Gastrocnemius medialis (tissue), 4 donors: ENCODE measurements at regions of chr4 and their contacts with region 1.

Region 1: DNA sequence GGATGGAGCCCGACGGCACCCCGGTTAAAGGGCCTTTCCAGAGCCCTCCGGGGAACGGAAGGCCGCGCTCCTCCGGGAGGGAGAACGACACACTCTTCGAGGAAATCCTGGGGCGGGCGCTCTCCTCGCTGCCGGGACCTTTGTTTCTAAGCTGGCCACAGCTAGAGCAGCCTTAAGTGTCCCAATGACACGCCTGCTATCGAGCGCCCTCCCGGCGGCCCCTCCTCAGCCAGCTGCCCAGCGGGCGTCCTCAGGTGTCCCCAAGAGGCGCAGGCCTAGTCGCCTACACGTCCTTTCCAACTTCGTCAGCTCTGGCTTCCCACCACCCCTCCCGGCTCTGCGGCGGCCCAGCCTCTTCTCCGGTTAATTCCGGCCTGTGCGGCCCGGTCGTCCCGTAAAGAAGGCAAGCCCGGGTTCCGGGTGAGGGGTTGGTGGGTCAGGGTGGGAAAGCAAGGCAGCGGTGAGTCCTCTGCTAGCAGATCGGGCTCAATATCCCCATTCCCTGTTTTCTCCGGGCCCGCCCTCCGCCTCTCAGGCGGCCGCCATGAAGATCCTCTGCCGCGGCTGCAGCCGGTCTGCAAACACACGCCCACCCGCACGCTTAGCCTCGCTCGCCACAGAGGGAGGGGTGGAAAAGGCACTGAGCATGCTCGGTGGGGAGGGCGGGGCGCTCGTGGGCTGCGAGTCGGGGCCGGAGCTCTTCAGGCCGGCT is 449 bp upstream of the RAP1GDS1 start:
- DNase-seq: peak; percentile 93 to 94
- ATAC-seq: peak; percentile 86
- H3K4me3 ChIP-seq: peak overlapping the region; percentile 89 to 98 (median 90)
- H3K27ac ChIP-seq: peak overlapping the region; percentile 96 to 99 (median 98)
- H3K4me1 ChIP-seq: peaks cover 19% of the 10 kb centered on the region in 2 donors
- H3K27me3 ChIP-seq: no peaks in the 10 kb centered on the region
- CTCF ChIP-seq: no peak
- POLR2A ChIP-seq: peak; percentile 80 to 94

Region 2: DNA sequence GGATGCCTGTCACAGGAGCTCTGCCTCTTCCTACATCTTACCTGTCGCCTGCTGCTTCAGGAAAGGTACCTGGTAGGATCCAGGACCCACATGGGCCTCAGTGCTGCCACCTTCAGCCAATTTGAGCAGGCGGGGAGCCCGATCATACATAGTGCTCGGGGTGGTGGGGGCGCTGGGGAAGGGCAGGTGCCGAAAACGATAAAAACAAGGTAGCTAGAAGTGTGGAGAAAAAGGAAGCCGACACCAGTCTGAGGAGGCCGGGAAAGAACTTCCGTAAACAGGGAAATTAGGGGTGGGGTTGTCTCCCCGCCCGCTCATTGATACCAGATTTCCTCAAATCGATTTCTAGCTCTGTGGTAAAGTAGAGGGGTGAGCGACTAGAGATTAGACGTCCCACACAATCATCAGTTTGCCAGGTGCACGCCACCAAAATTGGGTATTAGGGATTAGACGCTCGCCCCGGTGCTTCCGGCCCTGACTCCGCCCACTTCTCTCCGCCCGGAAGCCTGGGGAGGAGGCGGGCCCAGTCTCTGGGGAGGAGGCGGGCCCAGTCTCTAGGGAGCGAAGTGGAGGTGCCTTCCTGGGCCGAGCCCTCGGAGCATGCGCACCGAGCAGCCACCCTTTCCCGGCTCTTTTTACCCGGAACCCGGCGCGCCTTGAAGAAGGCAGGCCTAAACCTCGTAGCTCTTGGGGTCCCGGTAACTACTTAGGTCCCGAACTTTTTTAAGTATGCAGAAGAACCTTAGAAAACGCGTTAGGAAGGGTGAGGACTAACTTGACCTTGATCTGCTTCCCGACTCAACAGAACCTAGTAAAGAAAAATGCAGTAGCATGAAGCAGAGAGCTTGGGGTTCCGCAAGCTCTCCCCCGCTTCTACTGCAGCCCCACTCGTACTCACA is 117.5 kb before region 1 on chr4 and contains the start of gene STPG2:
- in situ Hi-C with region 1: loop called in 2 of 4 experiments (anchors 10 kb)
- intact Hi-C with region 1: loop called (anchors 2 kb)
- DNase-seq: peak; percentile 84 to 87
- ATAC-seq: peak; percentile 97 to 99
- H3K4me3 ChIP-seq: peak within 1 kb of the TSS; percentile 58 to 73 (median 71)
- H3K27ac ChIP-seq: peak within 1 kb of the TSS; percentile 77 to 85 (median 78)
- H3K4me1 ChIP-seq: peaks cover 0 to 11% of the 10 kb centered on the region in 2 donors
- H3K27me3 ChIP-seq: peaks cover 0 to 3% (median 0%) of the 10 kb centered on the region in 3 donors
- CTCF ChIP-seq: peak in 2 of 5 experiments; percentile 39 to 47
- POLR2A ChIP-seq: peak; percentile 14 to 37
- total RNA-seq, gene STPG2: 0.42 TPM in 1 of 4 donors, not detected in the others

Region 3: DNA sequence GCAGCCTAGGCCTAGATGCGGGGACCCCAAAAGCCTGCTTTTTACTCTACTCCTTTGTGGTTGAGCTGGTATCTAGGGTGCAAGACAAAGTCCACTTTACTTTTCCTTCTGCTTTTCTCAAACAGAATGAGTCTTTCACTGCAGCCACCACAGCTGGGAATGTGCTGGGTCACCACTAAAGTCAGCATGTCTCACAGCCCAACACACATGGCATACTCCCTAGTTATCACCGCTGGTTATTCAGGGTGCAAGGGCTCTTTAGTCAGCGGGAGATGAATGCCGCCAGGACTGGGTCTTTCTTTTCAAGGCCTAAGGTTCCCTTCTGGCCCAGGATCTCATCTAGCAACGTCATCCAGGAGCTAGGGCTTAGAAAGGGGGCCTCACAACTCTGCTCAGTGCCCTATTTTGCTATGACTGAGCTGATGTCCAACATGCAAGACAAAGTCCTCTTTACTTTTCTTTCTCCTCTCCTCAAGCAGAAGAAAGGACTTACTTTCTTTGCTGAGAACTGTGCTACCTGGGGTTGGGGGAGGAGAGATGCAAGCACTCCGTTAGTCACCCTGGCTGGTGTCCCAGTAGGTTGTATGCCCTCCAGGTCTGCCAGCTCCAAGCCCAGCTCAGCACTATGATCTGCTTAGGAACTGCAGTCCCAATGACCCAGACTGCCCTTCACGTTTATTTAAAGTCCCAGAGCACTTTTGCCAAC is 94.6 kb before region 1 on chr4:
- in situ Hi-C with region 1: no loop called
- intact Hi-C with region 1: loop called (anchors 1 kb)
- DNase-seq: peak; percentile 60 to 79
- ATAC-seq: peak; percentile 97 to 99
- H3K4me3 ChIP-seq: no peak overlapping the region
- H3K27ac ChIP-seq: peak overlapping the region in 2 of 4 donors; percentile 29 to 35
- H3K4me1 ChIP-seq: peaks cover 3 to 11% of the 10 kb centered on the region in 2 donors
- H3K27me3 ChIP-seq: no peaks in the 10 kb centered on the region
- CTCF ChIP-seq: no peak
- POLR2A ChIP-seq: no peak

Region 4: GRCh38 chr4:98406819-98407218 is 146.1 kb after region 1 on chr4:
- in situ Hi-C with region 1: no loop called
- intact Hi-C with region 1: no loop called
- DNase-seq: no peak
- ATAC-seq: no peak
- H3K4me3 ChIP-seq: no peak overlapping the region
- H3K27ac ChIP-seq: no peak overlapping the region
- H3K4me1 ChIP-seq: no peaks in the 10 kb centered on the region
- H3K27me3 ChIP-seq: no peaks in the 10 kb centered on the region
- CTCF ChIP-seq: no peak
- POLR2A ChIP-seq: no peak

Region 5: DNA sequence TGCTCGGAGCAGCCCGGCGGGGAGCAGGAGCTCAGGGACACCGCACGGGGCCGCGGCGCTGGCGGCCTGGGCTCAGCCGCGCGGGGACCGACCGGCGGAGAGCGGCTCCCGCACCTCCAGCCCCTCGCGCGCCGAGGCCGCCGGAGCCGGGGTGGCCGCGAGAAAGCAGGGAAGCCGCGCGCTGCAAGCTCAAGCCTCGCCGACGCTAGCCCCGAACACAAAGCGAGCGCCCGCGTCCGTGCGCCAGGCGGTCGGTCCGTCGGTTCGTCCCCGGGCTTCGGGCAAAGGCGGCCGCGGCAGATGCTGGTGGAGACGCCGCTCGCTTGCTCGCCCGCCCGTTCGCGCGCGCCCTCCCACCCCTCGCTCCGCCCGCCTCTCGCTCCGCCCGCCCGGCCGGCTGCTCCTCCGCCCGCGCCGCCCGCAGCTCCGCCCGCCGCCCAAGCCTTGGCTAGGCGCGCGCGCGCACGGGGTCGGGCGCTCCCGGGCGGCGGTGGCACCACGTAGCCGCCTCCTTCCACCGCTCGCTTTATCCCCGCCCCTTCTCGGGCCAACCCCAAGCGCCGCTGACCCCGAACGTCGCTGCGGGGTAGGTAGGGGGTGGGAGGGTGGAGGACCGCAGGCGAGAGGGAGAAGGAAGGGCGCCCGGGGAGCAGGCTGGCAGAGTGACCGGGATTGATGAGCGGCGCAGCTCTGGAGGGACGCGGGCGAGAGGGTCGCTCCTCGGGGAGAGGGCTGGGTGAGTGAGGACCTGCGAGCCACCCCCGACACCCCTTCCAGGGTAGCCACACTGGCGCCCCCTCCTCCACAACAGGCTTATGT is 397.8 kb after region 1 on chr4 and contains the start of gene TSPAN5:
- in situ Hi-C with region 1: loop called in 1 of 4 experiments (anchors 25 kb)
- intact Hi-C with region 1: loop called (anchors 2 kb)
- DNase-seq: peak; percentile 30 to 48
- ATAC-seq: peak; percentile 51 to 55
- H3K4me3 ChIP-seq: peak within 1 kb of the TSS; percentile 57 to 75 (median 69)
- H3K27ac ChIP-seq: peak within 1 kb of the TSS; percentile 74 to 81 (median 78)
- H3K4me1 ChIP-seq: peaks cover 21 to 28% of the 10 kb centered on the region in 2 donors
- H3K27me3 ChIP-seq: peaks cover 0 to 17% (median 0%) of the 10 kb centered on the region in 3 donors
- CTCF ChIP-seq: no peak
- POLR2A ChIP-seq: peak; percentile 54 to 67
- total RNA-seq, gene TSPAN5: 0.55 to 18.7 (median 0.79) TPM

Region 6: DNA sequence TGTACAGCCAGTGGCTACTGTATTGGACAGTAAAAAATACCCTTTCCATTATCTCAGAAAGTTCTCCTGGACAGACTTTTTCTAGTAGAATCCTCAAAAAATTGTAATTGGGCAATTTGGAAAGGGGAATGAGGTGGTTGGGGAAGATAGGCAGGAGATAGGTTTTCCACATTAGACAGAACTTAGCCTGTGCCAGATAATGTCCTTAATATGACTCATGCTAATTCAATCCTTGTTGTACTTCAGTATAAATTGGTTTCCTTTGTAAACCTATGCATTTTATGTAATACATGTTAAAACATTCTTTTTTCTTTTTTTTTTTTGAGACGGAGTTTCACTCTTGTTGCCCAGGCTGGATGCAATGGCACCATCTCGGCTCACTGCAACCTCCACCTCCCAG is 659.3 kb after region 1 on chr4:
- in situ Hi-C with region 1: loop called in 1 of 4 experiments (anchors 25 kb)
- intact Hi-C with region 1: loop called (anchors 5 kb)
- DNase-seq: no peak
- ATAC-seq: no peak
- H3K4me3 ChIP-seq: no peak overlapping the region
- H3K27ac ChIP-seq: no peak overlapping the region
- H3K4me1 ChIP-seq: peaks cover 8 to 11% of the 10 kb centered on the region in 2 donors
- H3K27me3 ChIP-seq: no peaks in the 10 kb centered on the region
- CTCF ChIP-seq: no peak
- POLR2A ChIP-seq: no peak

Region 7: DNA sequence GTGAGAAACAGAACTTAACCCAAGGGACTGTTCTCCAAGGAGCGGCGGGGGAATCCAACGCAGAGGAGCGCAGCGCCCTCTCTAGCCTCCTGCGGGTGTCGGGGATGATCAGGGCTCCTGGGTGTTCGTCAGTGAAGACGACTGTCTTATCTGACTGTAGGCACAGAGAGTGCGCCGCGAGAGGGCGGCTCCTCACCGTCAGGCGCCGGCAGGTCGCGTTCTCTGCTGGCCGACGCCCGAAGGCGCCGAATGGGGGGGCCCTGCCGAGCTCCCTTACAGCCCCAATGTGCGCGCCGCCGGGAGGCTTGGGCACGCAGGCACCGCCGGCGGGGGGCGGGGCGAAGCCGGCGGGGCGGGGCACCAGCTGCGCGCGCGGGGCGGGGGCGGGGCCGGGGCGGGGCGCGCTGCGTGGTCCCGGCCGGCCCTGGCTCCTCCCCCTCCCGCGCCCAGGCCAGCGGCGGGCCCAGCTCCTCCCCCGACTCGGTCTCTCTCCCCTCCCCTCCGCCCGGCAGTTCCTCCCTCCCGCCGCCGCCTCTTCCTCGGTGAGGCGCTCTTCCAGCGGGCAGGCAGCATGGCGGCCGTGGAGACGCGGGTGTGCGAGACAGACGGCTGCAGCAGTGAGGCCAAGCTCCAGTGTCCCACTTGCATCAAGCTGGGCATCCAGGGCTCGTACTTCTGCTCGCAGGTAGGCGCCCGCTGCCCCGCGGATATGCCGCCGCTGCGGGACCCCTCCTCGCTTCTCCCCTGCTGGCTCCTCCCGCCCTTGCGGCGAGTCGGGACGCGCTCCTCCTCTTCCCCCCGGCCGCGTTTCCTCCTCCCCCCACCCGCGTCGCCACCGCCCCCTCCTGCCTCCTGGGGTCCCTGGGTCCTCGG is 734.7 kb after region 1 on chr4 and contains the start of gene METAP1:
- in situ Hi-C with region 1: no loop called
- intact Hi-C with region 1: loop called (anchors 1 kb)
- DNase-seq: peak; percentile 93 to 96
- ATAC-seq: peak; percentile 88 to 90
- H3K4me3 ChIP-seq: peak within 1 kb of the TSS; percentile 76 to 100 (median 93)
- H3K27ac ChIP-seq: peak within 1 kb of the TSS; percentile 87 to 97 (median 96)
- H3K4me1 ChIP-seq: peaks cover 13 to 16% of the 10 kb centered on the region in 2 donors
- H3K27me3 ChIP-seq: no peaks in the 10 kb centered on the region
- CTCF ChIP-seq: peak; percentile 55 to 69 (median 56)
- POLR2A ChIP-seq: peak; percentile 70 to 75
- total RNA-seq, gene METAP1: 33.3 to 45.0 (median 37.9) TPM

Region 8: GRCh38 chr4:99949034-99949998 is 1688.6 kb after region 1 on chr4:
- in situ Hi-C with region 1: no loop called
- intact Hi-C with region 1: loop called (anchors 2 kb)
- DNase-seq: peak; percentile 81 to 89
- ATAC-seq: peak; percentile 56 to 67
- H3K4me3 ChIP-seq: peak overlapping the region; percentile 79 to 95 (median 86)
- H3K27ac ChIP-seq: peak overlapping the region; percentile 96 to 98 (median 98)
- H3K4me1 ChIP-seq: peaks cover 30 to 40% of the 10 kb centered on the region in 2 donors
- H3K27me3 ChIP-seq: no peaks in the 10 kb centered on the region
- CTCF ChIP-seq: peak; percentile 73 to 93 (median 80)
- POLR2A ChIP-seq: no peak